ENCODE measurements at regions of chr3 and their contacts with region 1.

Region 1: DNA sequence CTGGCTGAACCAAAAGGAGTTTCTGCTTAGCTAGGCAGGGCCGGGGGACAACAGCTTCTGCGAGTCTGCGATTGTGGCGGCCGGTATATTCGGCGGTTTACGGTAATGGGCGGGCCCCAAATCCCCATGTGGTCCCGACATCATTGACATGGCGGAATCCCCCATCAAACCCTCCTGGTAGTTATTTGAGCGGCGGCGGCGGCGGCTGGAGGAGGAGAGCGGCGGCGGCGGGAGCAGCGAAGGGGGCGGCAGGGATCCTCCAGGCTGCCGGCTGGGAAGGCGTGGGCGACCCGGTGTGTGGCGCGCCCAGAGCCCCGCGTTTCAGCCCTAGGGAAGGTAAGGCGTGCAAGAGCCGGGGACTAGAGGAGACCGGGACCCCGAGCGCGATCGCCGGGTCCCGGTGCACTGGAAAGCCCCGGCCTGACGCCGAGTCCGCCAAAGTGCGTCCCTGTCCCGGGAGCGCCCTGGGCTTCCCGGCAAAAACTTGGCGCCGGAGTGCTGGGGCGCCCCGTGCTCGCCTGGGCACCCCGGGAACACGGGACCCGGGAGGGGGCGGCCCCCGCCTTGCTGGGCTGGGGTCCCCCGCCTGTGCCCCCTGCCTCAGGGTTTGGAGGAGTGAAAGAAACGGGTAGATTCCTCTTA is at the start of gene FNDC3B:
- DNase-seq: peak; percentile 98
- H3K4me3 Mint-ChIP-seq: peak within 1 kb of the TSS; percentile 91
- H3K27ac Mint-ChIP-seq: peak within 1 kb of the TSS; percentile 98
- H3K4me1 Mint-ChIP-seq: peaks cover 59% of the 10 kb centered on the region
- H3K27me3 Mint-ChIP-seq: no peaks in the 10 kb centered on the region
- CTCF ChIP-seq: no peak
- total RNA-seq, gene FNDC3B: 345 and 453 TPM in 2 replicates

Region 2: DNA sequence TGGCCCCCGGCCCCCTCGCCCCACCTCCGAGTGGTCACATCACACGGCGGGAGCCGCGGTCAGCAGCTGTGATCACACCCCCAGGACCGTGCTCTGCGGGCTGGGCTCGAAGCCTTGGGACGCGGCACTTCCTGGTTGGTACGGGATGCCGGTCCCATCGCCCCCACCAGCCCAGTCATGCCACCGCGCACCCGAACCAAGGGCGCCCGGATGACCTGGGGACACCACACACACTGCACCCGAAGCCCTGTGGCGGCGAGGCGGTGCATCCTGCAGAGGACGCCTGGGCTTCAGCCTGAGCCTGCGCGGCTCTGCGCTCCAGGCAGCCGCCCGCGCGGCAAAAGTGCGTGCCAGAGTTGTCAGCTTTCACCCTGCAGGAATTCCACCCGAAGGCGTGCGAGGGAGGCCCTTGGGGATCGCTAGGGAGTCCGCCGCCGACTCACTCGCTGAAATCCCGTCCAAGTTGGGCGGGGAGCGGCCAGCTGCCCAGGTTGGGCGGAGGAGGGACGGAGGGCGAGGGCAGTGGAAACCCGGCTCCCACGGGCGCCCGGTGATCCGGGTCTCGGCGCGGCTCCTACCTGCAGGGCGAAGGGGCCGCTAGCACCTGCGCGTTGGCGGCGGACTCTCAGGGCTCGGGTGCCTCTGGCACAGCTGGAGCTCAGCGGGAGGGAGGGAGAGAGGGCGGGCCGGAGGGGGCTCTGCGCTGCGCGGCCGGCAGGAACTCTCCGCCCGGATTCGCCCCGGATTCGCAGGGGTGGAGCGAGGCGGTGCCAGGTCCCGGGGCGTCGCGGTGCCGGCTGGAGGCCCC is 229.5 kb before region 1 on chr3 and contains the start of gene PLD1:
- CTCF ChIA-PET with region 1: interaction called, 4 read pairs
- intact Hi-C with region 1: loop called (anchors 2 kb)
- DNase-seq: peak; percentile 97
- H3K4me3 Mint-ChIP-seq: peak within 1 kb of the TSS; percentile 96
- H3K27ac Mint-ChIP-seq: peak within 1 kb of the TSS; percentile 94
- H3K4me1 Mint-ChIP-seq: peaks cover 62% of the 10 kb centered on the region
- H3K27me3 Mint-ChIP-seq: no peaks in the 10 kb centered on the region
- CTCF ChIP-seq: no peak
- total RNA-seq, gene PLD1: 58.5 and 61.2 TPM in 2 replicates

Region 3: GRCh38 chr3:171874251-171874679 is 165.3 kb before region 1 on chr3:
- CTCF ChIA-PET with region 1: interaction called, 3 read pairs
- intact Hi-C with region 1: loop called (anchors 2 kb)
- DNase-seq: peak; percentile 69
- H3K4me3 Mint-ChIP-seq: peak overlapping the region; percentile 36
- H3K27ac Mint-ChIP-seq: peak overlapping the region; percentile 97
- H3K4me1 Mint-ChIP-seq: peaks cover 74% of the 10 kb centered on the region
- H3K27me3 Mint-ChIP-seq: no peaks in the 10 kb centered on the region
- CTCF ChIP-seq: no peak

Region 4: GRCh38 chr3:171936191-171936841 is 103.2 kb before region 1 on chr3:
- CTCF ChIA-PET with region 1: interaction called, 23 read pairs
- intact Hi-C with region 1: loop called (anchors 1 kb)
- DNase-seq: peak; percentile 84
- H3K4me3 Mint-ChIP-seq: peak overlapping the region; percentile 50
- H3K27ac Mint-ChIP-seq: peak overlapping the region; percentile 73
- H3K4me1 Mint-ChIP-seq: peaks cover 91% of the 10 kb centered on the region
- H3K27me3 Mint-ChIP-seq: no peaks in the 10 kb centered on the region
- CTCF ChIP-seq: no peak

Region 5: GRCh38 chr3:171974986-171975837 is 64.3 kb before region 1 on chr3:
- CTCF ChIA-PET with region 1: interaction called, 3 read pairs
- intact Hi-C with region 1: loop called (anchors 5 kb)
- DNase-seq: no peak
- H3K4me3 Mint-ChIP-seq: no peak overlapping the region
- H3K27ac Mint-ChIP-seq: no peak overlapping the region
- H3K4me1 Mint-ChIP-seq: peaks cover 26% of the 10 kb centered on the region
- H3K27me3 Mint-ChIP-seq: no peaks in the 10 kb centered on the region
- CTCF ChIP-seq: no peak

Region 6: DNA sequence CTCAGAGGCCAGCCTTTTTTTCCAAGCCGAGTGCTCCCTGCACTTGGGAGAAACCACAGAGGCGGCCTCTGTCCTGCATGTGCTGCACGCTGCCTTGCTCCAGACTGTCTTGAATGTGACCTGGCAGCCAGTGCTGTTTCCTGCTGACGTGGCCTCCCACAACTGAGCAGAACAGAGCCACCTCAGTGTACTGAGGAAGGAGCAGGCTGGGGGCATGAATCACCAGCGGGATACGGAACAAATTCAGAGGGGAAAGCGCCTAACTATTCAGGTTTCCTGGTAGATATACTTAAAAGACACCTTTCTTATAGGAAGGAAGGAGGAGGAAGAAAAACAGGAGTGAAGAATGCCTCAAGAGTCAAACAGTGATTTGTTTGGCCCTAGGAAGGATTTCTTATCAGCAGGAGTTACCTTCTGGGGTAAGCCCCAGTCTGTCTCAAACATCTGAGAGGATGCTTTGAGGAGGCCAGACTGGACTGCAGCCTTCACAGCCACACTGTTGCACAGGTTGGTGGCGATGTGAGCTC is 113.8 kb after region 1 on chr3:
- CTCF ChIA-PET with region 1: no interaction called
- intact Hi-C with region 1: loop called (anchors 1 kb)
- DNase-seq: peak; percentile 98
- H3K4me3 Mint-ChIP-seq: peak overlapping the region; percentile 56
- H3K27ac Mint-ChIP-seq: peak overlapping the region; percentile 99
- H3K4me1 Mint-ChIP-seq: peaks cover 84% of the 10 kb centered on the region
- H3K27me3 Mint-ChIP-seq: no peaks in the 10 kb centered on the region
- CTCF ChIP-seq: no peak